Activated naive CD4-positive, alpha-beta T cell treated with anti-CD3 and anti-CD28 coated beads for 36 hours (primary cell): ENCODE measurements at regions of chr2 and their contacts with region 1.

Region 1: GRCh38 chr2:168246483-168247340 is 683 bp downstream of the STK39 start:
- DNase-seq: peak; percentile 78
- H3K4me3 Mint-ChIP-seq: peak overlapping the region; percentile 88
- H3K27ac Mint-ChIP-seq: peak overlapping the region; percentile 88
- H3K4me1 Mint-ChIP-seq: peaks cover 35% of the 10 kb centered on the region
- H3K27me3 Mint-ChIP-seq: peaks cover 3% of the 10 kb centered on the region

Region 2: GRCh38 chr2:168160897-168161296 is 85.8 kb before region 1 on chr2:
- CTCF ChIA-PET with region 1: interaction called, 3 read pairs
- intact Hi-C with region 1: loop called (anchors 1 kb)
- DNase-seq: peak; percentile 32
- H3K4me3 Mint-ChIP-seq: no peak overlapping the region
- H3K27ac Mint-ChIP-seq: no peak overlapping the region
- H3K4me1 Mint-ChIP-seq: peaks cover 32% of the 10 kb centered on the region
- H3K27me3 Mint-ChIP-seq: no peaks in the 10 kb centered on the region

Region 3: GRCh38 chr2:168224346-168224745 is 22.4 kb before region 1 on chr2:
- CTCF ChIA-PET with region 1: no interaction called
- intact Hi-C with region 1: loop called (anchors 1 kb)
- DNase-seq: no peak
- H3K4me3 Mint-ChIP-seq: no peak overlapping the region
- H3K27ac Mint-ChIP-seq: no peak overlapping the region
- H3K4me1 Mint-ChIP-seq: peaks cover 46% of the 10 kb centered on the region
- H3K27me3 Mint-ChIP-seq: no peaks in the 10 kb centered on the region

Region 4: GRCh38 chr2:168336864-168337263 is 90.2 kb after region 1 on chr2:
- CTCF ChIA-PET with region 1: interaction called, 3 read pairs
- intact Hi-C with region 1: loop called (anchors 2 kb)
- DNase-seq: peak; percentile 80
- H3K4me3 Mint-ChIP-seq: no peak overlapping the region
- H3K27ac Mint-ChIP-seq: no peak overlapping the region
- H3K4me1 Mint-ChIP-seq: peaks cover 7% of the 10 kb centered on the region
- H3K27me3 Mint-ChIP-seq: no peaks in the 10 kb centered on the region

Region 5: DNA sequence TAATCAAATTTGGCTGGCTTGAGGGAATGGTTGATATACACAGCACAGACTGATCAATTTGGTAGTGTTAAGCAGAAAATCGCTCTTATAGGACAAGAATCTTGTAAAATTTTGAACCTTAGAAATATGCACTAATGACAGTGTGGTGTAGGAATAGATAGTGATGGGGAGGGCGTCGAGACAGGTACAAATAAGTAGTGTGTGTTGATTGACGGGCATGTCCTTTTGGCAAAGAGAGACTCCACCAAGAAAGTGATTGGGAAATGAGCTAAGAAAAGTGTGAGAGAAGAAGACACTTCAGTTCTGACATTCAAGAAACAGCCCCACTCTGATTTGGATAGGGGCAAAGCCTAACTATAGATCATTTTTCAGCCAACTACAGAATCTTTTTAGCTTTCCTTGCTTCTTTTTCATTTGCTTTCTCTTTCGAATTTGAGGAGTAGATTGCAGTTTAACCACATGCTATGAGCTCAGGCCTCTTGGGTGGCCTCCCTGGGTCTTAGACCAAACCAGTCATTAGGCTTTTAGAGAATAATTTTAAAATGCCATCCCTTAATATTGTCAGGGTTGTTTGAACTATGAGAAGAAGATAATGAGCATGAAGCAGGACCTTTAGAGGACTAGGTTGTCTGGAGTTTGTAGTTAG is 336.5 kb after region 1 on chr2:
- CTCF ChIA-PET with region 1: no interaction called
- intact Hi-C with region 1: loop called (anchors 5 kb)
- DNase-seq: peak; percentile 20
- H3K4me3 Mint-ChIP-seq: no peak overlapping the region
- H3K27ac Mint-ChIP-seq: peak overlapping the region; percentile 20
- H3K4me1 Mint-ChIP-seq: peaks cover 62% of the 10 kb centered on the region
- H3K27me3 Mint-ChIP-seq: no peaks in the 10 kb centered on the region